Pancreas (tissue), 10 donors: ENCODE measurements at regions of chr6 and their contacts with region 1.

Region 1: GRCh38 chr6:144582939-144583613 is 297.9 kb downstream of the UTRN start:
- DNase-seq: peak in 2 of 6 donors; percentile 37 to 58
- ATAC-seq: peak in 3 of 4 donors; percentile 41 to 60 (median 53)
- H3K4me3 ChIP-seq: no peak overlapping the region
- H3K27ac ChIP-seq: no peak overlapping the region
- H3K4me1 ChIP-seq: peaks cover 0 to 17% (median 12%) of the 10 kb centered on the region in 3 donors
- H3K27me3 ChIP-seq: no peaks in the 10 kb centered on the region
- CTCF ChIP-seq: no peak

Region 2: GRCh38 chr6:144140867-144141266 is 442.2 kb before region 1 on chr6:
- intact Hi-C with region 1: no loop called
- DNase-seq: no peak
- ATAC-seq: no peak
- H3K4me3 ChIP-seq: no peak overlapping the region
- H3K27ac ChIP-seq: no peak overlapping the region
- H3K4me1 ChIP-seq: no peaks in the 10 kb centered on the region
- H3K27me3 ChIP-seq: no peaks in the 10 kb centered on the region
- CTCF ChIP-seq: no peak

Region 3: GRCh38 chr6:144647971-144648651 is 65.0 kb after region 1 on chr6:
- intact Hi-C with region 1: no loop called
- DNase-seq: no peak
- ATAC-seq: peak; percentile 83 to 87 (median 86)
- H3K4me3 ChIP-seq: peak overlapping the region in 2 of 4 donors; percentile 1
- H3K27ac ChIP-seq: peak overlapping the region; percentile 22 to 86 (median 61)
- H3K4me1 ChIP-seq: peaks cover 24 to 66% (median 58%) of the 10 kb centered on the region in 3 donors
- H3K27me3 ChIP-seq: no peaks in the 10 kb centered on the region
- CTCF ChIP-seq: no peak

Region 4: DNA sequence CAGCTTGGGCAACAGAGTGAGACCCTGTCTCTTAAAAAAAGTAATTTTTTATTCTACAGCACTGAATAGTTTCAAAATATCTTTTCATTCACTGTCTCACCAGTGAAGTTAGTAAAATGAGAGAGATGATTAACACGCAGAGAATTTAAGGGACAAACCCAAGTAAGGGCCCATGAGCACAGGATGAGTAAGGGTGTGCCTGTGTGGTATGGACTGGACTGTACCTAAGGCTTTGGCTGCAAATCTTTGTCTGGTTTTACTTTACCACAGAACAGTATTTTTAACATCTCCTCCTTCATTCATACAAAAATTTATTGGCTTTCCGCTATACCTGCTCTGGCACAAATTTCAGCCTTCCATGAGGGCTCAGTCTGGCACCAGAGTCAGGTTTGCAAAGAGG is 135.4 kb after region 1 on chr6:
- intact Hi-C with region 1: no loop called
- DNase-seq: no peak
- ATAC-seq: no peak
- H3K4me3 ChIP-seq: no peak overlapping the region
- H3K27ac ChIP-seq: no peak overlapping the region
- H3K4me1 ChIP-seq: no peaks in the 10 kb centered on the region
- H3K27me3 ChIP-seq: no peaks in the 10 kb centered on the region
- CTCF ChIP-seq: no peak

Region 5: GRCh38 chr6:144931172-144932035 is 348.3 kb after region 1 on chr6:
- intact Hi-C with region 1: loop called in 1 of 3 experiments (anchors 10 kb)
- DNase-seq: peak in 3 of 6 donors; percentile 28 to 57 (median 32)
- ATAC-seq: peak; percentile 81 to 91 (median 85)
- H3K4me3 ChIP-seq: no peak overlapping the region
- H3K27ac ChIP-seq: no peak overlapping the region
- H3K4me1 ChIP-seq: peaks cover 0 to 4% (median 0%) of the 10 kb centered on the region in 3 donors
- H3K27me3 ChIP-seq: no peaks in the 10 kb centered on the region
- CTCF ChIP-seq: peak; percentile 26 to 53 (median 47)

Region 6: DNA sequence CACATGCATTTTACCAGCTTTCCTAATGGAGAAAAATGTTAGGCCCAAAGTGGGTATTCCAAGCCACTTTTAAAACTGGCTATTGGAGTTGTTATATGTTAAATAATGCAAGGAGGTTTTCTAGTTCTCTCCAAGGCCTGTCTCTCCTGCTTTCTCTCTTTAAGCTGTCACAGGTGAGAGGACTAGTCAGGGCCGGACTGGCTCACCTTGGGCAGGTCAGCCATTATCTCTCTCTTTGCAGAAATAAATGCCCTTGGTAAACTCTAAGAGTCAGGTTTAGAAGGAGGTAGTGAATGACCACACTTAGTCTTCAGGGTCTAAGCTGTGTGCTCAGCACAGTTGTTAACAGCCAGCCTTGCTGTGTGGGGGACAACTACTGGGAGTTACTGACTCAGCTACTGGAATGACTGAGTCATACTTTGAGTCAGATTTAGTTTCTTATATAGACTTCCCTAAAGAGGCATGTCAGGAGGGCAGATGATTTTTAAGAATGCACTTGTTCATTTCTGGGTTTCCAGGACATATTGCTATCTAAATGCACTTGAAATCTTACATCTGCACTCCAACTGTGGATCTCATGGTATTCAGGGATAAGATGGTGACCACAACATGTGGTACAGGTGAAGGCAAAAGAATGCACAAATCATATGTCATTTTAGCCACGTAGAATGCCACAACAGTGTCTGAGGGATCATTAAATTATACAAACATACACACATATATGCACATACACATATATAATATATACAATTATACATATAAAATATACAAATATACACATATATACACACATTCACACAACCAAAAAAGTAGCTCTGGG is 432.9 kb after region 1 on chr6:
- intact Hi-C with region 1: no loop called
- DNase-seq: peak in 1 of 6 donors; percentile 35
- ATAC-seq: peak; percentile 76 to 97 (median 89)
- H3K4me3 ChIP-seq: no peak overlapping the region
- H3K27ac ChIP-seq: peak overlapping the region in 1 of 4 donors; percentile 15
- H3K4me1 ChIP-seq: peaks cover 3 to 7% (median 5%) of the 10 kb centered on the region in 3 donors
- H3K27me3 ChIP-seq: no peaks in the 10 kb centered on the region
- CTCF ChIP-seq: no peak

Region 7: DNA sequence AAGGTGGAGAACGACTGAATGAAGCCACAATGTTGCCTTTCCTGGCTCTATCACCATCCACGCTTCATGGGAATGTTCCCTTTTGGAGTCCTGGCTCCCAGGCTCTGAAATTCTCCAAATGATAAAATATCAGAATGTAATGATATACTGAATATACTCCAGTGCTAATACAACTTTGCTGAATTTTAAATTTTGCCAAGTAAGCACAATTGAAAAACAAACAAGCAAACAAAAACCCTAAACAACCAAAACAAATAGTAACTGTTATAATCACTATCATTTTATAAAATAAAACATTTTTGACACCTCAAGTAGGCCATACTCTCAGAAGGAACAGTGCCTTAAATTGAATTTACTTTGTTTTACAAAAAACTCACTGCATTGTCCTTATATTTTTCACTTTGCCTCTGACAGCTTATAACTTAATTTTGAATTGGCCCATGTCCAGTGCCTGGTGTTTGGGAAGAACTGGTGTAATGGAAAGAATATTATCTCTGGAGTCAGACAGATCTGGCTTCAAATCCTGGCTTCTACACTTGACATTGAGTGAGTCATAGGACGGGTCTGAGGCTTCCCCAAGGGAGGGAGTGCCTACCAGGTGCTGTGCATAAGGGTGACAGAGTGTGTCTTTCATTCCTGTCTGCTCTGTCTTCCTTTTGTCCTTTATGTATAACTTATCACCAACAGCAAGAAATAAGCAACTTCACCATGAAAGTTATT is 453.9 kb after region 1 on chr6:
- intact Hi-C with region 1: loop called in 1 of 3 experiments (anchors 10 kb)
- DNase-seq: no peak
- ATAC-seq: peak in 2 of 4 donors; percentile 44 to 56
- H3K4me3 ChIP-seq: no peak overlapping the region
- H3K27ac ChIP-seq: no peak overlapping the region
- H3K4me1 ChIP-seq: no peaks in the 10 kb centered on the region
- H3K27me3 ChIP-seq: no peaks in the 10 kb centered on the region
- CTCF ChIP-seq: no peak